ENCODE measurements at regions of chr20 and their contacts with region 1.

Region 1: GRCh38 chr20:62772990-62773844 is 23.1 kb upstream of the MRGBP start:
- DNase-seq: peak in 2 of 10 donors; percentile 27 to 35
- H3K4me3 ChIP-seq: no peak overlapping the region
- H3K27ac ChIP-seq: peak overlapping the region in 8 of 59 donors; percentile 10 to 59 (median 26)
- H3K27me3 ChIP-seq: peaks cover 0 to 12% (median 0%) of the 10 kb centered on the region in 45 donors
- CTCF ChIP-seq: no peak

Region 2: GRCh38 chr20:62710886-62711493 is 62.2 kb before region 1 on chr20:
- intact Hi-C with region 1: loop called in 1 of 2 experiments (anchors 5 kb)
- DNase-seq: no peak
- H3K4me3 ChIP-seq: peak overlapping the region in 3 of 59 donors; percentile 10 to 33 (median 16)
- H3K27ac ChIP-seq: no peak overlapping the region
- H3K27me3 ChIP-seq: peaks cover 0 to 56% (median 37%) of the 10 kb centered on the region in 45 donors
- CTCF ChIP-seq: no peak

Region 3: GRCh38 chr20:62900052-62900691 is 127.0 kb after region 1 on chr20:
- intact Hi-C with region 1: no loop called
- DNase-seq: peak; percentile 56 to 87 (median 80)
- H3K4me3 ChIP-seq: peak overlapping the region in 18 of 59 donors; percentile 0 to 38 (median 12)
- H3K27ac ChIP-seq: peak overlapping the region in 35 of 59 donors; percentile 1 to 67 (median 46)
- H3K27me3 ChIP-seq: no peaks in the 10 kb centered on the region
- CTCF ChIP-seq: peak; percentile 59 to 96 (median 87)

Region 4: GRCh38 chr20:63009045-63009961 is 236.1 kb after region 1 on chr20:
- intact Hi-C with region 1: no loop called
- DNase-seq: peak in 9 of 10 donors; percentile 61 to 84 (median 72)
- H3K4me3 ChIP-seq: peak overlapping the region in 26 of 59 donors; percentile 2 to 49 (median 24)
- H3K27ac ChIP-seq: no peak overlapping the region
- H3K27me3 ChIP-seq: peaks cover 7 to 100% (median 88%) of the 10 kb centered on the region in 45 donors
- CTCF ChIP-seq: peak; percentile 70 to 99 (median 95)